Activated CD8-positive, alpha-beta T cell treated with anti-CD3 and anti-CD28 coated beads for 36 hours (primary cell): ENCODE measurements at regions of chr17 and their contacts with region 1.

Region 1: GRCh38 chr17:2814481-2815341 is 18.5 kb downstream of the RAP1GAP2 start:
- DNase-seq: peak; percentile 93
- ATAC-seq: peak; percentile 79
- H3K4me3 Mint-ChIP-seq: peak overlapping the region; percentile 37
- H3K27ac Mint-ChIP-seq: no peak overlapping the region
- H3K4me1 Mint-ChIP-seq: peaks cover 16% of the 10 kb centered on the region
- H3K27me3 Mint-ChIP-seq: peaks cover 22% of the 10 kb centered on the region
- CTCF ChIP-seq: no peak

Region 2: DNA sequence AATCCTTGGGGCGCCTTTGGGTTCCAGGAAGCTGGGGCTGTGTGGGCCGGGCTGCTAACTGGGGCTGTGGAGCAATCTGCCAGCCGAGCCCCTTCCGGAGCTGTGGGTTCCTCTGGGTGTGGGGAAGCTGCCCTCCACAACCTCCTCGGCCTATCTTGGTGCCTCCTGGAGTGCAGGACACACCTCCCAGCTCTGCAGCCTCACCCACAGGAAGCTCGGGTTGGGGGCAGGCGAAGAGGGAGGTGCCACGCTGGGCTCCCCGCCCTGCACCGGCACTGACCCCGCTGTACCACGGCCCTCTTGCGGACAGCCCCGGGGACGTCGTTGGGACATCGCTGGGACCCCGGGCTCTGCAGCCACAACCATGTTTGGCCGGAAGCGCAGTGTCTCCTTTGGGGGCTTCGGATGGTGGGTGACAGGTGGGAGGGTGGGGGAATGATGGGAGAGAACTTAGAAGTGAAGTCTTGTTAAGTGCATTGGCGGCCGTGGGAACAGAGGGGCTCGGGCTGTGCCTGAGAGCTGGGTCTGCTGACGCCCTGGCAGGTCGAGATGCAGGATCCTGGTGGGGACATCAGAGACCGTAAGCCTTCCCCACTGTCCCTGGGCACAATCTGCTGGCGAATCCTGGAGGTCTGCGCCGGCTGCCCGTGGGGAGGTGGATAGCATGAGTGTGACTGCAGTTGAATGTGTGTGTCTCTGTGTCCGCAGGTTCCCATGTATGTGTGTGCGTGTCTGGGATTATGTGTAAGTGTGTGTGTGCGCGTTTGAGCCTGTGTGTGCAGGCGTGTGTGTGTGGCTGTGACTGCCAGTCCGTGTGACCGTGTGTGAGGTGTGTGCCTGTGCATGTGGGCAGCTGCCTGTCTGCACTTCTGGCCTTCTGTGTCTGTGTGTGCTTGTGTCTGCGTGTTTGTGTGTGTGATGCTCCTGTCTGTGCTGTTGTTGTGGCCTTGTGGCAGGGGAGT is 18.3 kb before region 1 on chr17 and contains the start of gene RAP1GAP2:
- CTCF ChIA-PET with region 1: interaction called, 7 read pairs
- POLR2A ChIA-PET with region 1: interaction called, 12 read pairs
- intact Hi-C with region 1: no loop called
- DNase-seq: peak; percentile 69
- ATAC-seq: peak; percentile 81
- H3K4me3 Mint-ChIP-seq: peak within 1 kb of the TSS; percentile 5
- H3K27ac Mint-ChIP-seq: no peak within 1 kb of the TSS
- H3K4me1 Mint-ChIP-seq: peaks cover 63% of the 10 kb centered on the region
- H3K27me3 Mint-ChIP-seq: peaks cover 48% of the 10 kb centered on the region
- CTCF ChIP-seq: no peak
- total RNA-seq, gene RAP1GAP2: 0.31 to 0.50 TPM

Region 3: GRCh38 chr17:2883567-2884101 is 68.9 kb after region 1 on chr17:
- CTCF ChIA-PET with region 1: no interaction called
- POLR2A ChIA-PET with region 1: no interaction called
- intact Hi-C with region 1: no loop called
- DNase-seq: no peak
- ATAC-seq: no peak
- H3K4me3 Mint-ChIP-seq: no peak overlapping the region
- H3K27ac Mint-ChIP-seq: no peak overlapping the region
- H3K4me1 Mint-ChIP-seq: peaks cover 6% of the 10 kb centered on the region
- H3K27me3 Mint-ChIP-seq: no peaks in the 10 kb centered on the region
- CTCF ChIP-seq: no peak

Region 4: DNA sequence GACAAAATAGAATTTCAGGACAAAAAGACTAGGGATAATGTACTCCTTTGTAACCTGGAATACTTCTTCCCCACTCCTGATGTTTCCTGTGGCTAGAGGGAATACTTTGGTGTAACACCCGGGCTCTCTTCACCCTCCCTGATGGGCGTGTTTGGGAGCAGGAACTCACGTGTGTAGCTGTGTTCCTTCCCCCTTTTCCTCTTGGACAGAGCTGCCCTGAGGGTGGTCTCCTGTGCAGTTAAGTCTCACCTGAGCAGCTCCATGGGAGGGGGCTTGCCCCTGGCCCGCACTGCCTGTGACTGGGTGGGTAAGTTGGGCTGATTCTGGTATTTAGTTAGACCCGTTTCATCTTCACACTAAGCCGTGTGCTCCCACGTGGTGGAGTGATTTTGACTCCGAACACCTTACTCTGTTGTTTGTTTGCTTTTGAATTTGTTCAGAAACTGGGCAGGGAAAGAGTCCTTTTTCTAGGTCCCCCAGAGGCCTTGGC is 160.8 kb after region 1 on chr17:
- CTCF ChIA-PET with region 1: no interaction called
- POLR2A ChIA-PET with region 1: no interaction called
- intact Hi-C with region 1: no loop called
- DNase-seq: no peak
- ATAC-seq: no peak
- H3K4me3 Mint-ChIP-seq: no peak overlapping the region
- H3K27ac Mint-ChIP-seq: no peak overlapping the region
- H3K4me1 Mint-ChIP-seq: no peaks in the 10 kb centered on the region
- H3K27me3 Mint-ChIP-seq: no peaks in the 10 kb centered on the region
- CTCF ChIP-seq: no peak